Activated CD8-positive, alpha-beta T cell treated with anti-CD3 and anti-CD28 coated beads for 36 hours (primary cell): ENCODE measurements at regions of chr15 and their contacts with region 1.

Region 1: DNA sequence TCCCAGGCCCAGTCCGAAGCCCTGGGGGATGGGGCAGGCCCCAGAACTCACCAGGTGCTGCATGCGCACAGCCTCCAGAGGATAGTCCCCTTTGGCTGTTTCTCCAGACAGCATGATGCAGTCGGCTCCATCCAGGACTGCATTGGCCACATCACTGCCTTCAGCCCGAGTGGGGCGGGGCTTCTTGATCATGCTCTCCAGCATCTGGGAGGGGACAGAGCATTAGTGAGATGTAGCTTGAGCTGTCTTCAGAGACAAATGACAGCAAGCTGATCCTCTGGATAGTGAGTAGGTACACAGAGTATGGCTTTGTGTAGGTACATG is 9.1 kb upstream of the GRAMD2A start:
- DNase-seq: no peak
- ATAC-seq: no peak
- H3K4me3 Mint-ChIP-seq: no peak overlapping the region
- H3K27ac Mint-ChIP-seq: peak overlapping the region; percentile 46
- H3K4me1 Mint-ChIP-seq: peaks cover 29% of the 10 kb centered on the region
- H3K27me3 Mint-ChIP-seq: no peaks in the 10 kb centered on the region
- CTCF ChIP-seq: no peak

Region 2: DNA sequence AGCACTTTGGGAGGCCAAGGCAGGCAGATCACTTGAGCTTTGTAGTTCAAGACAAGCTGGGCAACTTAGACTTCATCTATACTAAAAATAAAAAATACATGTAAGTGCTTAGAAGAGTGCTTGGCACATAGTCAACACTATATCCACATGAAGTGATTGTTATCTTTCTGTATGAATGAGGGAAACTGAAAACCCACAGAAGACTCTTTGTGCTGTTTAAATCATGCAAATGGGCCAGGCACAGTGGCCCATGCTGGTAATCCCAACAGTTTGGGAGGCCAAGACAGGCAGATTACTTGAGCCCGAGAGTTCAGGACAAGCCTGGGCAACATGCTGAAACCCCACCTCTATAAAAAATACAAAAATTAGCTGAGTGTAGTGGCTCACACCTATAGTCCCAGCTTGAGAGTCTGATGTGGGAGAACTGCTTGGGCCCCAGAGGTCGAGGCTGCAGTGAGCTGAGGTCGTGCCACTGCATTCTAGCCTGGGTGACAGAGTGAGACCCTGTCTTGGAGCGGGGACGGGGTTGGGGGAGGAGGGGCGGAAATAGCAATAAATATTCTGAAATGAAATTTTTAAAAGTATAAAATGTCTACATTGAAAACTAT is 266.6 kb before region 1 on chr15:
- CTCF ChIA-PET with region 1: no interaction called
- POLR2A ChIA-PET with region 1: no interaction called
- intact Hi-C with region 1: no loop called
- DNase-seq: no peak
- ATAC-seq: no peak
- H3K4me3 Mint-ChIP-seq: no peak overlapping the region
- H3K27ac Mint-ChIP-seq: no peak overlapping the region
- H3K4me1 Mint-ChIP-seq: no peaks in the 10 kb centered on the region
- H3K27me3 Mint-ChIP-seq: no peaks in the 10 kb centered on the region
- CTCF ChIP-seq: no peak

Region 3: GRCh38 chr15:72192416-72192815 is 14.2 kb before region 1 on chr15:
- CTCF ChIA-PET with region 1: no interaction called
- POLR2A ChIA-PET with region 1: no interaction called
- intact Hi-C with region 1: no loop called
- DNase-seq: no peak
- ATAC-seq: no peak
- H3K4me3 Mint-ChIP-seq: no peak overlapping the region
- H3K27ac Mint-ChIP-seq: no peak overlapping the region
- H3K4me1 Mint-ChIP-seq: peaks cover 2% of the 10 kb centered on the region
- H3K27me3 Mint-ChIP-seq: peaks cover 16% of the 10 kb centered on the region
- CTCF ChIP-seq: no peak

Region 4: DNA sequence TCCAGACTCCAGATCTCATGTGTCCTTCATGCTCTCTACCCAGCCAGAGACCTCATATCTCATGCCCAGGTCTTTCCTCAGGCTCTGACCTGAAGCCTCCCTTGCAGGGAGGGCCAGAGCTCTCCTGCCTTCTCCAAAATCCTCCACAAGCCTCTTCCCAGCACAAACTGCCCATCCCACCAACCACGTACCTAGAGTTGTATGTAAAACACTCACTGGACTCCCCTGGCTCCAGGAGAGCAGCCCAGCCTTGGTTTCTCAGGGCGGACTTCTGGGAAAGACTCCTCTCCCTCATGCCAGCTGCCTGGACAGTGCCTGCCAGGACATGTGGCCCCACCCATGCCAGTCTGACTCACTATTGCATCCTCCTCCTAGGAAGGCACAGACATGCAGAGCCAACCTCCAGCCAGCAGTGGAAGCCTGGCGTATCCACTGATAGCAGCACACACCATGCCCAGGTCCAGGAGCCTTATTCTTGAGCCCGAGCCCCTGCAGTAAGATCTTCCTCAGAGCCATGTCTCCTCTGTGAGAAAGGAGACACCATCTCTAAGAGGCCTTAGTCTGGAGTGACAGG is 15.7 kb after region 1 on chr15:
- CTCF ChIA-PET with region 1: interaction called, 35 read pairs
- POLR2A ChIA-PET with region 1: interaction called, 24 read pairs
- intact Hi-C with region 1: no loop called
- DNase-seq: no peak
- ATAC-seq: no peak
- H3K4me3 Mint-ChIP-seq: peak overlapping the region; percentile 40
- H3K27ac Mint-ChIP-seq: peak overlapping the region; percentile 84
- H3K4me1 Mint-ChIP-seq: peaks cover 80% of the 10 kb centered on the region
- H3K27me3 Mint-ChIP-seq: no peaks in the 10 kb centered on the region
- CTCF ChIP-seq: no peak

Region 5: DNA sequence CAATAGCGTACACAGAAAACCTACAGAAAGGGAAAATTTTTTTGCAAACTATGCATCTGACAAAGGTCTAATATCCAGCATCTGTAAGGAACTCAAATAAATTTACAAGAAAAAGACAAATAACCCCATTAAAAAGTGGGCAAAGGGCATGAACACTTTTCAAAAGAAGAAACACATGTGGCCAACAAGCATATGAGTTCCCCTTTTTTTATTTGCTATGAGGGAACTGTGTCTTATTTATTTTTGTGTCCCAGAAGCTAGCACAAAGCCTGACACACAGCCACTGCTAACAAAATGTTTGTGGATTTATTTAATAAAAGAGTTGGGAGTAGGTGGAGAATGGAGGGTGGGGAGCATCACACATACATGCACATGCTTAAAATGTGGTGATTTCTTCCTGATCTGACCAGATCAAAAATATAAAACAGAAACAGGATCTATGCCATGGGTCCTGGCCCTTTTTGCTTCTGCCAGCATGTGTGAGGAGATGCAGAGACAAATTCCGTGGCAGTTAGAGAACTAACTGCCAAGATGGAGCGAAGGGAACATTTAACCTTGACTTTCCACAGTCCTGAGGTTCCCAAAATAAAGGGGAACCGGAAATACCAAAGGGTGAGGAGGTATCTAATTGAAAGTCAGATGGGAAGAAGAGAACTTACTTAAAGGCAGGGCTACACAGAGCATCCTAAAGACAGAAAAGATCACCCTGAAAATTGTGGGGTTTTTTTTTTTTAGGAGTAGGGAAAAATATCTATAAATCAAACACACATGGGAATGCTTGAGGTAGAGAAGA is 191.4 kb after region 1 on chr15 and contains the start of gene TMEM202:
- CTCF ChIA-PET with region 1: no interaction called
- POLR2A ChIA-PET with region 1: no interaction called
- intact Hi-C with region 1: no loop called
- DNase-seq: no peak
- ATAC-seq: no peak
- H3K4me3 Mint-ChIP-seq: no peak within 1 kb of the TSS
- H3K27ac Mint-ChIP-seq: no peak within 1 kb of the TSS
- H3K4me1 Mint-ChIP-seq: no peaks in the 10 kb centered on the region
- H3K27me3 Mint-ChIP-seq: peaks cover 11% of the 10 kb centered on the region
- CTCF ChIP-seq: no peak
- total RNA-seq, gene TMEM202: not detected

Region 6: DNA sequence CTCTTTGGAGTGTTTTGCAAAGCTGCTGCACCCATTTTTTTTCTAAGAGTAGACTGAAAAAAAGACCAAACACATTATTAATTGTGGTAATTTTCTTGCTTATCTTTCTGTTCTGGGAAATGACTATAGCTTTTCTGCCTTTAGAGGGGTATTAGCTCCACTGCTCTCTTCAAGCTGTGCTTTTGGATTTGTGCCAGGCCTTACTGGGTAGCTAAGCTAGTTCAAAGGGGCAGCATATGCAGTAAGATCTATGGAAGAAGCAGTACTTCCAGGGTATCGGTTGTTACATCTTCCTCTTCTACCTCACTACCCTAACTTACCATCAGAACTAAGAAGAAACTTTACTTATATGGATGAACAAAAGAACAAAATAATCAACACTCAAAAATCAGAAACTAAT is 238.8 kb after region 1 on chr15:
- CTCF ChIA-PET with region 1: no interaction called
- POLR2A ChIA-PET with region 1: no interaction called
- intact Hi-C with region 1: no loop called
- DNase-seq: no peak
- ATAC-seq: no peak
- H3K4me3 Mint-ChIP-seq: no peak overlapping the region
- H3K27ac Mint-ChIP-seq: no peak overlapping the region
- H3K4me1 Mint-ChIP-seq: no peaks in the 10 kb centered on the region
- H3K27me3 Mint-ChIP-seq: peaks cover 3% of the 10 kb centered on the region
- CTCF ChIP-seq: no peak